ENCODE measurements at regions of chr9 and their contacts with region 1.

Region 1: DNA sequence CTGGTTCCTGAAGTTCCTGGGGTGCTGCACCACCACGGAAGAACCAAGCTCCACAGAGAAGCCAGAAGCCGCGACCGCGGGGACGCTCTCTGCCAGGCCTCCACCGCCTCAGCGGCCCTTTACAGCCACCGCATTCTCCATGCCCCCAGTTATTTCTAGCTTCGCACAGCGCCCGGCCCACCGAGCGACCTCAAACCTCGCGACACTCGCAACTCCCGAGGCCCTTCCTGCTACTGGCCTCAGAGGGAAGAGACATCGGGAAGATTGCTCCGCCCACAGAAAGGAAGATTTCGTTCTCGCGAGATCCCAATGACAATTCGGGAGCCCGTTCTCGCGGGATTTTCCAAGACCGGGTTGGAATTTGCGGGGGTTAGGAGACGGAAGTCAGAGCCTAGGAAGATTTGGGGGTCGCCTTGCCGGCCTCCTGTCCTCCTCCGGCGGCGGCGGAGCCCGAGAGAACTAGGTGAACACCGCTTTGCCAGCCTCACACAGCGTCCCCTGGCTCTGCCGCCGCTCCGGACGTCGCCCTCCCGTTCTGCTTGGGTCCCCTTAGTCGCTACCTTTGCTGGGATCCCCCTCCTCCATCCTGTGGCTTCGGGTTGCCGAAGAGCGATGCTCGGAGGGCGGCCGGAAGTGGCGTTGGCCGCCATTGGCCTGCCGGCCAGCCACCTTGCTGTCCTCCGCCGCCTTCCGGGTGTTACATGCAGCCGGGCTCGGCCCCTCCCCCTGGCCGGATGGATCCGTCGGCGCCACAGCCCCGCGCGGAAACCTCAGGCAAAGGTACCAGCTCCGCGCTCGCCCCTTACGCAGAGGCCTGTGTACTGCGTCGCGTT is at the start of gene ERCC6L2:
- DNase-seq: peak; percentile 92 to 98
- ATAC-seq: peak; percentile 96 to 98 (median 98)
- H3K4me3 ChIP-seq: peak within 1 kb of the TSS in 1 of 10 donors; percentile 93
- H3K27ac ChIP-seq: peak within 1 kb of the TSS in 5 of 10 donors; percentile 99 to 100 (median 100)
- H3K4me1 ChIP-seq: peaks cover 0 to 27% (median 20%) of the 10 kb centered on the region in 9 donors
- H3K27me3 ChIP-seq: no peaks in the 10 kb centered on the region
- CTCF ChIP-seq: peak in 3 of 9 donors; percentile 9 to 30 (median 27)
- total RNA-seq, gene ERCC6L2: 21.6 to 37.5 (median 28.4) TPM

Region 2: DNA sequence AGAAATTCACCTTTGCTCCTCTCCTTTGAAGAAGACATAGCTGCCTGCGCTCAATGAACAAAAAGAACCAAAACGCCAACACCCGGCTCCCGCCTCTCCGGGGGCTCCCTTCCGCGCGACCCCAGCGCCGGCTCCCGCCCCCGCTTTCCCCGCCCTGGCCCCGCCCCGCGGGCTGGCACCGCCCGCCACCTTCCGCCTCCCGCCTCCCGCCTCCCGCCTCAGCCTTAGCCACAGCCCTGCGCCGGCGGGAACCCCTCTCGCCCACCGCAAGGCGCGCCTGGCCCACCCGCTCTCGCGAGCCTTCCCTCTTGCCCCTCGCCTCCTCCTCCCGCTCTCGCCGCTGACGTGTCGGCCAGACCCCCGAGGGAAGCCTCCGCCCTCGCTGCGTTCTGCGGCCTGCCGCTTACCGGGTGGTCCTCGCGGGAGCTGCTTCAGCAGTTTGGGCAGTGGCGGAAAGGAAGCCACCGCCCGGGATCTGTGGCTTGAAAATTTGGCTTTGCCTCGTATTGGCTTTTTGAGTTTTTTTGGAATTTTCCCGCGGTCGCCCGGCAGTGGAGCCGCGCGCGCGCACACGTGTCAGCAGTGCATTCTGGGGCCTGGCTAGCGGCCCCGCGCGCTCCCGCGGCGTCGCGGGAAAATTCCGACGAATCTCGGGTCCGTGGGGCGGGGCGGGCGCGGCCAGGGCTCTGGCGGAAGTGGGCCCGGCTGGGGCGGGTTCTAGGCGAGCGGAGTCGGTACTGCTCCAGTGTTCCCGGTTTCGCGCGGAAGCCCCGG is 558.2 kb before region 1 on chr9 and contains the start of gene FANCC:
- intact Hi-C with region 1: loop called in 1 of 10 experiments (anchors 5 kb)
- DNase-seq: peak; percentile 93 to 95
- ATAC-seq: peak; percentile 97 to 99 (median 98)
- H3K4me3 ChIP-seq: peak within 1 kb of the TSS; percentile 58 to 100 (median 93)
- H3K27ac ChIP-seq: peak within 1 kb of the TSS; percentile 64 to 99 (median 96)
- H3K4me1 ChIP-seq: peaks cover 0 to 22% (median 7%) of the 10 kb centered on the region in 9 donors
- H3K27me3 ChIP-seq: no peaks in the 10 kb centered on the region
- CTCF ChIP-seq: peak in 1 of 9 donors; percentile 4
- total RNA-seq, gene FANCC: 3.1 to 6.8 (median 4.7) TPM

Region 3: DNA sequence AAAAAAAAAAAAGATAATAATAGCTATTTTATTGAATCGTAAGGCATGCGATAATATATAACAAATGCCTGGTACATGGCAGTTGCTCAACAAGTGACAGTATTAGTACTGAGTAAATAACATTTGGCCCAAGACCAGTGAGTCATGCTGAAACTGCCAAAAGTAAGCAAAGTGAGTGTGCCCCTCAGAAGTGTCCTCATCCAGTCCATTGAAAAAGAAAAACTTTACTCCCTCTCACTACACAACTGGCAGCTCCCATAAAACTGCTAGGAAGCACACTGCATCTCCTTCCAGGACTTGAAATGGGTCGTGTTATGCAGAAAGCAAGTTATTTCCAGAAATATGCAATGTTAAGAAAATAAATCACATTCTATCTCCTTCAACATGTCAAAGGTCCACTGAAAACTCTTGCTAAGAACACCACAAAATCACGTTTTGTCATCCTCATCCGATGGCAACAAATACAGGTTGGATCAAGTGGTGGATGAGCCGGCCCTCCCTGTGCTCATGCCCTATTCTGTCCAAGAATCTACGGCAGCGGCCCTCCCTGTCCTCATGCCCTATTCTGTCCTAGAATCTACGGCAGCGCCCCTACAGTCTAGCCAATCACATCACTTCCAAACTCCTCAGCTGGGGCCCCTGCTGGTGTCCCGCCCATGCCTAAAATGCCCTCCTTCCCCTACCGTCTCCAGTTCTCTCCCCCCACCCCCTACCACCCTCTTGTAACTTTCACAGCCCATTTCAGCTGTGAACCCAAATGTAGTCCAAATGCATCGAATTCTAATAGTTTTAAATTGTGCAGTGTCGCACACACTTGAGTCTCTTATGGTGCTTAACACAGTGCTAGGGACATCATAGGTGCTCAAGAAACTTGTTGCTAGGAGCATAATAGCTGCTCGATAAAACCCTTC is 371.2 kb before region 1 on chr9:
- intact Hi-C with region 1: loop called in 4 of 10 experiments (anchors 1 to 10 kb)
- DNase-seq: peak in 1 of 2 donors; percentile 25
- ATAC-seq: peak in 4 of 8 donors; percentile 26 to 43 (median 32)
- H3K4me3 ChIP-seq: peak overlapping the region in 2 of 10 donors; percentile 69 to 81
- H3K27ac ChIP-seq: peak overlapping the region in 1 of 10 donors; percentile 16
- H3K4me1 ChIP-seq: peaks cover 0 to 48% (median 28%) of the 10 kb centered on the region in 9 donors
- H3K27me3 ChIP-seq: peaks cover 0 to 49% (median 0%) of the 10 kb centered on the region in 7 donors
- CTCF ChIP-seq: no peak

Region 4: DNA sequence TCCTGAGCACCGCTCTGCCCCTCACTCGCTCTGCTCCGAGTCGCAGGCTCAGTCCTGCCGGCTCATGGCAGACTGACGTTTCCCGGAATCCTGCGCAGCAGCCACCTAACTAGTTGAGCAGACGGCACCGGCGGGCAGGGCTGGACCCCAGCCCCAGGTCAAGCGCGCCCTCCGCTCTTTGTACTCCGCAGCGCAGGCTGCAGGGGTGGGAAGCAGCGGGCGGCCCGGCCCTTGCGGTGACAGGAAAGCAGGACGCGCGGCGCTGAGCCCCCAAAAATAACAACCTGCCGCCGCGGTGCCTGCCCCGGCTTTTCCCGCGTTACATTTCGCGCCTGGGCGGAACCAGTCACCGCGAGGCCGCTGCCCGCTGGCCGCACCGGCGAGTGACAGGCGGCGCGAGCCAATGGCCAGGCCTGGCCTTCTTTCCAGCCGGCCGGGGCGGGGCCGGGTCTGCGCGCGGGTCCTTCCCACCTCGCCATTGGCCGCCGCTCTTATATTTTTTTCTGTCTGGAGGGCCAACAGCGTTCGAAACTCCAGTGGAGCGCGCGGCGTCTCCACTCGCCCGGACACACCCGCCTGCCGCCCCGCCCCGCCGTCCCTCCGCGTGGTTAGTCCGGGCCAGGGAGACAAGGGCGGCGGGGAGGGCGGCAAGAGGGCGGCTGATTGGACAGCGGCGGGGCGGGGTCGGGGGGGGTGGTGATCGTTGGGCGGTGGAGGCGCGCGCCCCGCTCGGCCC is 542.7 kb after region 1 on chr9 and contains the start of gene ZNF367:
- intact Hi-C with region 1: no loop called
- DNase-seq: peak; percentile 98
- ATAC-seq: peak; percentile 90 to 96 (median 92)
- H3K4me3 ChIP-seq: peak within 1 kb of the TSS; percentile 56 to 97 (median 85)
- H3K27ac ChIP-seq: peak within 1 kb of the TSS; percentile 95 to 100 (median 99)
- H3K4me1 ChIP-seq: peaks cover 7 to 52% (median 33%) of the 10 kb centered on the region in 9 donors
- H3K27me3 ChIP-seq: no peaks in the 10 kb centered on the region
- CTCF ChIP-seq: no peak
- total RNA-seq, gene ZNF367: 2.4 to 6.4 (median 4.0) TPM

Measured in heart right ventricle (tissue), 16 donors.